ENCODE measurements at regions of chr2 and their contacts with region 1.

Region 1: DNA sequence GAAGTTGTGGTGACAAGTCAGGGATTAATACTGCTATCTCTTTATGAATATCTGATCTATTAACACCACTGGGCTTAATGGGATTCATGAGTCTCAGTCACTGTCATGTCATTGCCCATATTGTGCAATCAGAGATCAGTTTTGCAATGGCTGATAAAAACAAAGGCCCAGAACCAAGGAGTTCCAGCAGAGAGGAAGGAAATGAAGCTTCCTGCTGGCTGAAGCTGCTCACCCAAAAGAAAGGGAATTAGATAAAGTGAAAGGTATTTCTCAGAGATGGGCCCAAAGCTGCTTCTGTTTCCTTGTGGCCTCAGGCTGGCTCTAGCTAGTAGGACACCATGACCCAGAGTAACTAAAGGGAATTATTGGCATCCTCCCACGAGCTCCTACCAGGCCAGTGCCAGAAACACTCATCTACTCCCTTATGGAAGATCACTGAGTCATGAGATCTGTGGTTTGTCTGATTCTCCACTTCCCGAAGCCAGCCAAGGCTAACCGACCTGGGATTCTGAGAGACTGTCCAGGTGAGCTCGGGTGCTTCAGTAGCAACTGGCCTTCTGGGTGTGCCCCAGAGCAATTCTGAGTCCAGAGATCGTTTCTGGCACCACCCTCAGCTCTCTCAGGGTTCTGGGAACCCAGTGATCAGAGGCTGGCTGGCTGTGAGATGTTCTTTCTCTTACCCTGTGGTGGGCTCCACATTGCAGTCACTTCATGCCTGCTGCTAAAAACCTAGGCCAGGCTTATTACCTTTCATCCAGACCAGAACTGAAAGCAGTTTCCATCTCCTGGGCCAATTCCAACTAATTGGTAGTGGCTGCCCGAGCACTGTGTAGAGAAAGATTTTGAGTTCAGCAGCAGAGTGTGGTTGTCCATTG is 129.5 kb upstream of the PELI1 start:
- DNase-seq: peak; percentile 97
- H3K4me3 Mint-ChIP-seq: peak overlapping the region; percentile 33
- H3K27ac Mint-ChIP-seq: peak overlapping the region; percentile 40
- H3K4me1 Mint-ChIP-seq: peaks cover 32% of the 10 kb centered on the region
- H3K27me3 Mint-ChIP-seq: no peaks in the 10 kb centered on the region
- CTCF ChIP-seq: no peak

Region 2: GRCh38 chr2:64214281-64215115 is 59.3 kb before region 1 on chr2:
- CTCF ChIA-PET with region 1: interaction called, 4 read pairs
- POLR2A ChIA-PET with region 1: interaction called, 7 read pairs
- intact Hi-C with region 1: loop called (anchors 5 kb)
- DNase-seq: peak; percentile 19
- H3K4me3 Mint-ChIP-seq: no peak overlapping the region
- H3K27ac Mint-ChIP-seq: peak overlapping the region; percentile 28
- H3K4me1 Mint-ChIP-seq: peaks cover 31% of the 10 kb centered on the region
- H3K27me3 Mint-ChIP-seq: no peaks in the 10 kb centered on the region
- CTCF ChIP-seq: no peak

Region 3: GRCh38 chr2:64263309-64263708 is 10.5 kb before region 1 on chr2:
- CTCF ChIA-PET with region 1: interaction called, 3 read pairs
- POLR2A ChIA-PET with region 1: interaction called, 23 read pairs
- intact Hi-C with region 1: no loop called
- DNase-seq: peak; percentile 67
- H3K4me3 Mint-ChIP-seq: peak overlapping the region; percentile 23
- H3K27ac Mint-ChIP-seq: peak overlapping the region; percentile 79
- H3K4me1 Mint-ChIP-seq: peaks cover 41% of the 10 kb centered on the region
- H3K27me3 Mint-ChIP-seq: no peaks in the 10 kb centered on the region
- CTCF ChIP-seq: no peak

Measured in MCF 10A (cell line).